ENCODE measurements at regions of chr4 and their contacts with region 1.

Region 1: DNA sequence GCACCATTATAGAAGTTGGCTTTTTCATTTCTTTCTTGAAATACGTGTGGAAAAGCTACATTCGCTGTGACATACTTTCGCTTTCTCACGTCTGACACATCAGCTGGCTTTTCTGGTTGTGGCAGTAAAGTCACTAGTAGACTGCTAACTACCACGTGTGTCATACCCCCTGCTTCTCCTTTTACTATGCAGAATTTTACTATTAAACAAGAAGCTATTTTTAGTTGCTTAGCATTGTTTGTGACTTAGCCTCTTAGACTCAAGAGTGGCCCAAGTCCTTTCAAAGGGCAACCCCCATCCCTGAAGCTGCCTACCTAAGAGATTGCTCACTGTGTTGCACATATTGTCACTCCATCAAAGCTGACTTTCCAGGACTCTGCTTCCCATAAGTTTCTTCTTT is 2.1 kb upstream of the IL2 start:
- DNase-seq: peak; percentile 24
- H3K4me3 Mint-ChIP-seq: peak overlapping the region; percentile 66
- H3K27ac Mint-ChIP-seq: peak overlapping the region; percentile 77
- H3K4me1 Mint-ChIP-seq: peaks cover 43% of the 10 kb centered on the region
- H3K27me3 Mint-ChIP-seq: no peaks in the 10 kb centered on the region

Region 2: DNA sequence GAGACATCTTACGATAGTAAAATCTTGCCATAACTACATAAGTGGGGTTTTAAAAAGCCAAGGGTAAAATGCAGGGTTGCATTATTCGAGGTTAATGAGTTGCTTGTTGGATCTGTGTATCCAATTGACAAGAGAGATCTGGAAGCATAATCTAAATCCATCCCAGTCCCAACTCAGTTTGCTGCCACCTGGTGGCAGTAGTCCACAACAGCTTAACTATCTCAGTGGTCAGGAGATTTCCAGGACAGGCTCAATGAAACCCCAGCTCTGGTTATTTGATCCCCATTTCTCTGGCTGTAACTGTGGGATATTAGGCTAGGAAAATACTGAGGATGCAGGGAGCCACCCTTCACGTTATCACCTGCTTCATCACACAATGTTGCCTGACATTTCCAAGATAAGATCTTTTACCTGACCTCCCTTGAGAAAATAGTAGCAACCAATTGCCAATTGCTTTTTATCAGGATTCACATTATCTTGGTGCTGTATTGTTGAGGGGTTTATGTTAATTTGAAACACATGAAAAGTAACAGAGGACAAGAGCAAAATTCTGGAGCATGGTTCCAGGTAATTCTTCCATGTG is 1206.3 kb before region 1 on chr4:
- intact Hi-C with region 1: loop called (anchors 5 kb)
- DNase-seq: peak; percentile 28
- H3K4me3 Mint-ChIP-seq: no peak overlapping the region
- H3K27ac Mint-ChIP-seq: no peak overlapping the region
- H3K4me1 Mint-ChIP-seq: peaks cover 55% of the 10 kb centered on the region
- H3K27me3 Mint-ChIP-seq: peaks cover 1% of the 10 kb centered on the region

Region 3: GRCh38 chr4:122151982-122152710 is 306.5 kb before region 1 on chr4 and contains the start of gene BLTP1:
- intact Hi-C with region 1: loop called (anchors 1 kb)
- DNase-seq: peak; percentile 85
- H3K4me3 Mint-ChIP-seq: peak within 1 kb of the TSS; percentile 98
- H3K27ac Mint-ChIP-seq: peak within 1 kb of the TSS; percentile 92
- H3K4me1 Mint-ChIP-seq: peaks cover 50% of the 10 kb centered on the region
- H3K27me3 Mint-ChIP-seq: no peaks in the 10 kb centered on the region
- total RNA-seq, gene BLTP1: 28.1 and 32.6 TPM in 2 replicates

Region 4: DNA sequence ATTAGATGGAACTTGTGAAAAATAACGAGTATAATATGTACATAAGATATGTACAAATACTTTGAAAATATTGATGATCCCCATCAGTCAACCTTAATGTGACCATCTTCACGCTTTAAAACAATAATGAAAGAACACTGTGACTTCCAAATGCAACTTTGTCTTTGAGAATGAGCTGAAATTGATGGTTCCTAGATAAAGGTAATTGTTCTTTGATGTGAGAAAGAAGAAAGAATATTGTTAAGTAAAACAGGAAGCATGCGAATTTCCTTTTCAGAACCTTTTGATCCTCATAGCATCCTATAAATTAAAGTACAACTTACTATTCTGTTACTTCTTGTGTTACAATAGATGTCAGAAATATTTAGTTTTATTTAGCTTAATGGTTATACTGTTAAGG is 24.3 kb before region 1 on chr4:
- intact Hi-C with region 1: no loop called
- DNase-seq: no peak
- H3K4me3 Mint-ChIP-seq: no peak overlapping the region
- H3K27ac Mint-ChIP-seq: no peak overlapping the region
- H3K4me1 Mint-ChIP-seq: peaks cover 6% of the 10 kb centered on the region
- H3K27me3 Mint-ChIP-seq: no peaks in the 10 kb centered on the region

Region 5: GRCh38 chr4:122500852-122501501 is 42.4 kb after region 1 on chr4:
- intact Hi-C with region 1: loop called (anchors 1 kb)
- DNase-seq: no peak
- H3K4me3 Mint-ChIP-seq: no peak overlapping the region
- H3K27ac Mint-ChIP-seq: no peak overlapping the region
- H3K4me1 Mint-ChIP-seq: peaks cover 37% of the 10 kb centered on the region
- H3K27me3 Mint-ChIP-seq: peaks cover 11% of the 10 kb centered on the region

Region 6: GRCh38 chr4:122542411-122543236 is 84.0 kb after region 1 on chr4:
- intact Hi-C with region 1: loop called (anchors 1 kb)
- DNase-seq: no peak
- H3K4me3 Mint-ChIP-seq: peak overlapping the region; percentile 53
- H3K27ac Mint-ChIP-seq: peak overlapping the region; percentile 87
- H3K4me1 Mint-ChIP-seq: peaks cover 74% of the 10 kb centered on the region
- H3K27me3 Mint-ChIP-seq: peaks cover 1% of the 10 kb centered on the region

Region 7: GRCh38 chr4:122666527-122667245 is 208.1 kb after region 1 on chr4:
- intact Hi-C with region 1: loop called (anchors 5 kb)
- DNase-seq: no peak
- H3K4me3 Mint-ChIP-seq: peak overlapping the region; percentile 60
- H3K27ac Mint-ChIP-seq: peak overlapping the region; percentile 78
- H3K4me1 Mint-ChIP-seq: peaks cover 70% of the 10 kb centered on the region
- H3K27me3 Mint-ChIP-seq: no peaks in the 10 kb centered on the region

Region 8: DNA sequence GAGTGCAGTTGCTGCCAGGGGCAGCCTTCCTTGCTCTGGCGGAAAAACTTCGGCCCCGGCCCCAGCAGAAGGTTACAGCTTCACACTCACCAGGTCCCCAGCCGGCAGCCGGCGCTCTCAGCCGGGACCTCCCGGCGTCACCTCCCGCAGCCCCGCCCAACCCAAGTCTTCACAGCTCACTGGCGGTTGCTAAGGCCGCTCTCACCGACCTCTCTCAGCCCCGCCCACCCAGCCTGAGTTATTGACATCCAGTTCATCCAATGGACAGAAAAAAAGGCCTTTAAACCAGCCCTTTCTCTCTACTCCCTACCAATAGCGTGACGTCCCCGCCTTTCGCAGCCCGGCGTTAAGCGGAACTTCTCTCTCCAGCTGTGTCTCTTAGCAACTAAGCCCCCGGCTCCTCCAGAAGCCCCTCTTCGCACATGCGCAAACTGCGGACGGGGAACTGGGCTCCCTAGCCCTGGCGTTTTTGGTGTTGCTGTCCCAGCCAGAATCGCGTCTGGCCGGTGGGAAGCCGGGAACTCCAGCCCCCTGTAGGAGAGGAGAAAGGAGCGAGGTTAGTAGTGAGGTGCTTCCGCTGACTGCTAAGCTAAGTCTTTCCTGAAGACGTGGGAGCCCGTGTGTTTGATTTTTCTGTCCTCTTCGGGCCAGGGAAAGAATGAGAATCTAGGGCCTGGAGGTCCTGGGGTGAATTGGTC is 273.9 kb after region 1 on chr4 and contains the start of gene BBS12:
- intact Hi-C with region 1: loop called (anchors 5 kb)
- DNase-seq: peak; percentile 99
- H3K4me3 Mint-ChIP-seq: peak within 1 kb of the TSS; percentile 95
- H3K27ac Mint-ChIP-seq: peak within 1 kb of the TSS; percentile 92
- H3K4me1 Mint-ChIP-seq: peaks cover 14% of the 10 kb centered on the region
- H3K27me3 Mint-ChIP-seq: no peaks in the 10 kb centered on the region
- total RNA-seq, gene BBS12: 3.7 and 5.5 TPM in 2 replicates

Measured in activated T-helper 2 cell treated with anti-CD3 and anti-CD28 coated beads, Interferon-gamma antibody, Interleukin-2, Interleukin-4, amounts not matched to agents 10 μg/mL and 5 μg/mL and 100 μg/mL, durations not matched to agents 14 hours and 24 hours and 36 hours (primary cell).